Sigmoid colon (tissue), 7 donors: ENCODE measurements at regions of chrX and their contacts with region 1.

Region 1: GRCh38 chrX:45445745-45446412 is 245.2 kb upstream of the DIPK2B start:
- DNase-seq: no peak
- H3K4me3 ChIP-seq: no peak overlapping the region
- H3K27ac ChIP-seq: peak overlapping the region in 2 of 4 donors; percentile 26 to 55
- H3K4me1 ChIP-seq: peaks cover 0 to 16% (median 8%) of the 10 kb centered on the region in 4 donors
- H3K27me3 ChIP-seq: no peaks in the 10 kb centered on the region
- CTCF ChIP-seq: no peak
- EP300 ChIP-seq: no peak
- POLR2A ChIP-seq: no peak

Region 2: GRCh38 chrX:45505214-45505613 is 59.3 kb after region 1 on chrX:
- intact Hi-C with region 1: loop called (anchors 5 kb)
- DNase-seq: no peak
- H3K4me3 ChIP-seq: no peak overlapping the region
- H3K27ac ChIP-seq: peak overlapping the region in 3 of 4 donors; percentile 66 to 80 (median 78)
- H3K4me1 ChIP-seq: peaks cover 0 to 36% (median 6%) of the 10 kb centered on the region in 4 donors
- H3K27me3 ChIP-seq: no peaks in the 10 kb centered on the region
- CTCF ChIP-seq: no peak
- EP300 ChIP-seq: no peak
- POLR2A ChIP-seq: no peak

Region 3: GRCh38 chrX:45769761-45770582 is 324.1 kb after region 1 on chrX:
- intact Hi-C with region 1: loop called (anchors 10 kb)
- DNase-seq: peak; percentile 91
- H3K4me3 ChIP-seq: peak overlapping the region; percentile 28 to 47 (median 42)
- H3K27ac ChIP-seq: peak overlapping the region; percentile 66 to 76 (median 72)
- H3K4me1 ChIP-seq: peaks cover 0 to 9% (median 2%) of the 10 kb centered on the region in 4 donors
- H3K27me3 ChIP-seq: no peaks in the 10 kb centered on the region
- CTCF ChIP-seq: no peak
- EP300 ChIP-seq: no peak
- POLR2A ChIP-seq: peak; percentile 33 to 45